Activated CD8-positive, alpha-beta T cell treated with anti-CD3 and anti-CD28 coated beads, Interleukin-2, amount 10 ng/mL, durations not matched to agents 7 days and 5 days (primary cell): ENCODE measurements at regions of chr2 and their contacts with region 1.

Region 1: GRCh38 chr2:39379643-39380524 is 57.2 kb downstream of the MAP4K3 start:
- DNase-seq: peak; percentile 33
- ATAC-seq: peak; percentile 72
- H3K4me3 Mint-ChIP-seq: no peak overlapping the region
- H3K27ac Mint-ChIP-seq: no peak overlapping the region
- H3K4me1 Mint-ChIP-seq: peaks cover 10% of the 10 kb centered on the region
- H3K27me3 Mint-ChIP-seq: no peaks in the 10 kb centered on the region

Region 2: GRCh38 chr2:39221488-39221887 is 158.4 kb before region 1 on chr2:
- CTCF ChIA-PET with region 1: no interaction called
- POLR2A ChIA-PET with region 1: no interaction called
- DNase-seq: no peak
- ATAC-seq: no peak
- H3K4me3 Mint-ChIP-seq: no peak overlapping the region
- H3K27ac Mint-ChIP-seq: peak overlapping the region; percentile 48
- H3K4me1 Mint-ChIP-seq: peaks cover 70% of the 10 kb centered on the region
- H3K27me3 Mint-ChIP-seq: no peaks in the 10 kb centered on the region

Region 3: DNA sequence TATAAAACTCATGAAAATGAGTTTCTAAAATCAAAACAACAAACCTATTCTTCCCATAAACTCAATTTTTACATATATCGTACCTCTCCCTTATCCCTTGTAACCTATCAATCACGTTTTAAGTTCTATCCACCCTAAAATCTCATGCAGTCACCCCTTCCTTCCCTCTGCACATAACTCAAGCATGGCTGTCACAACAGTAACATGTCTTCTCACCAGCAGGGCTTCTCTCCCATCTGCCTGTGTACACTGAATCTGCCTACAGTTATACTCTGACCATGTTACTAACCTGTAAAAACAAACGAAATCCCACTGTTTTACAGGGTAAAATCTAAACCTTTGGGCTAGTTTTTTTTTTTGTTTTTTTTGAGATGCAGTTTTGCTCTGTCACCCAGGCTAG is 11.0 kb before region 1 on chr2:
- CTCF ChIA-PET with region 1: interaction called, 12 read pairs
- POLR2A ChIA-PET with region 1: no interaction called
- DNase-seq: no peak
- ATAC-seq: peak; percentile 36
- H3K4me3 Mint-ChIP-seq: no peak overlapping the region
- H3K27ac Mint-ChIP-seq: no peak overlapping the region
- H3K4me1 Mint-ChIP-seq: peaks cover 9% of the 10 kb centered on the region
- H3K27me3 Mint-ChIP-seq: no peaks in the 10 kb centered on the region

Region 4: GRCh38 chr2:39392672-39393071 is 12.8 kb after region 1 on chr2:
- CTCF ChIA-PET with region 1: interaction called, 12 read pairs
- POLR2A ChIA-PET with region 1: no interaction called
- DNase-seq: no peak
- ATAC-seq: no peak
- H3K4me3 Mint-ChIP-seq: no peak overlapping the region
- H3K27ac Mint-ChIP-seq: no peak overlapping the region
- H3K4me1 Mint-ChIP-seq: no peaks in the 10 kb centered on the region
- H3K27me3 Mint-ChIP-seq: no peaks in the 10 kb centered on the region

Region 5: DNA sequence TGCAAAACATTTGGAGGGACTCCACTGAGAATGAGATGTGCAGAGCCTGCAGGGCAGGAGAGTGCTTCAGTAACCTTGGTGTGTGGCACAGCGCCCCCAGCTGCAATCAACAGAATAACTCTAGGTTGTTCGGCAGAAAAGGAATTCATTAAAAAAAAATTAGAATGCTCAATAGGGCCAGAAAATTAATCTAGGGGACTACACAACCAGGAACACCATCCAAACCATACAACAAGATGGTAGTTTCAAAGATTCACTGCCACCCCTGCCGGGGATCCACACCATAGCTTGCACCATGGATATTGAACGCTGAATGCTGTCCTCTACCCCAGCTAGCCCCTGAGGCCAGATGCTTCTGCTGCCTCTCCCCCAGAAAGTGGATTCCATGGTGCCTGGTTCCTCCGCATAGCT is 349.1 kb after region 1 on chr2:
- CTCF ChIA-PET with region 1: interaction called, 77 read pairs
- POLR2A ChIA-PET with region 1: no interaction called
- DNase-seq: peak; percentile 43
- ATAC-seq: no peak
- H3K4me3 Mint-ChIP-seq: no peak overlapping the region
- H3K27ac Mint-ChIP-seq: no peak overlapping the region
- H3K4me1 Mint-ChIP-seq: peaks cover 7% of the 10 kb centered on the region
- H3K27me3 Mint-ChIP-seq: no peaks in the 10 kb centered on the region